GM12878 (cell line): ENCODE measurements at regions of chr7 and their contacts with region 1.

Region 1: DNA sequence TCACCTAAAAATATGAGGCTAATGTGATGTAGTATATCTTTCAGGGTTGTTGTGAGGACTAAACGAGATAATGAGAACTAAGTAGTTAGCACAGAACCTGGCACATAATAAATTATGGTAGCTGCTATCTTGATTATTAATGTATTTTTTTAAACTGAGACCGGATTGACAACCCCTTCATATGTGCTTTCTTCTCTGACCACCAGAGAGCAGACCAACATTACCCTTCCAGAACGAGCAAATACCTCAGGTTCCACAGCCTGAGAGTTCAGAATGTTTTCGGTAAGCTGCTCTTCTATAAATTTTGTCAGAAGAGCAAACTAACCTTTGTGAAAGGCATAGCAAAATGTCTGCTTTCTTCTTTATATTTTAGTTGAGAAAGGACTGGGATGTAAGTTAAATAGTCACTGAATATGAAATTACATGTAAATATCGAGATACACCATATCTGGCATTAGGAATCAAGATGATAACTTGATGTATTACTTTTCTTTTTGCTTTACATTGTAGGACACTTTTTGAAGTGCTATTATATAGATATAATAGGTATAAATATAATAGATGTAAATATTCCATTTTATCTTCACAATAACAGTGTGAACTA is 13.6 kb upstream of the BPGM start:
- DNase-seq: no peak
- ATAC-seq: peak; percentile 76
- H3K4me3 ChIP-seq: no peak overlapping the region
- H3K27ac ChIP-seq: no peak overlapping the region
- H3K4me1 ChIP-seq: peaks cover 16% of the 10 kb centered on the region
- H3K27me3 ChIP-seq: no peaks in the 10 kb centered on the region
- CTCF ChIP-seq: peak; percentile 63 to 80 (median 76)
- EP300 ChIP-seq: no peak
- POLR2A ChIP-seq: no peak
- RAD21 ChIP-seq: peak; percentile 92

Region 2: DNA sequence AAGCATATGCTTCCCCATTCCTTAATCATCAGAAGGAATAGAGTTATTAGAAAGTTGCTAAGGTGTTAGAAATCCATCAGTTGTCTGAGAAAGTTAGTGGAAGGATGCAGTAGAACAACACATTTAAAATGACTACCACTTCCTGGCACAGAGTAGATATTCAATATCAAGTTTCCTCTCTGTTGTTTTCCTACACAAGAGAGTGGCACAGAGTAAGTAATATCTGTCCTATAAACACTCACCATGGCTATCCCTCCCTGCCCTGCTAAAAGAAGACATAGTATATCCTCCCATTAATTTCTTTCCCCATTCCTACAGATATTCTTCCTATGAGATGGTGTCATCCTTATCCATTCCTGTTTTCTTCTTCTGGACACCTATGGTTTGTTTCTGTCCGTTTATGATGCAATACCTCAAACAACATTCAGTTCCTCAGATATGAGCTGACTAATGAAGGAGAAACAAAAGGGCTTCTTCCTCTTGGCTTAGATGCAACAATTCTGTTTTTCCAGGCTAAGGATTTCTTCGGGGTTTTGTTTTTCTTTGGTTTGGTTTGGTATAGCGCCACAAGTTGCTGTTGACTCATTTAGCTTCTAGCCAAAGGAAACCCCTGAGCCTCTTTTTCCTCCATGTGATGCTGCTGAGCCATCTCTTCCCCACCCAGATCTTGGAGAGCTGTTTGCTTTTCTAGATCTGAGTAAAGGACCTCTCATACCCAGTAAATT is 19.3 kb before region 1 on chr7:
- CTCF ChIA-PET with region 1: interaction called, 12 read pairs
- POLR2A ChIA-PET with region 1: no interaction called
- RAD21 ChIA-PET with region 1: interaction called, 3 read pairs
- SMC1A ChIA-PET with region 1: interaction called, 12 read pairs
- in situ Hi-C with region 1: no loop called
- intact Hi-C with region 1: no loop called
- DNase-seq: no peak
- ATAC-seq: no peak
- H3K4me3 ChIP-seq: no peak overlapping the region
- H3K27ac ChIP-seq: no peak overlapping the region
- H3K4me1 ChIP-seq: no peaks in the 10 kb centered on the region
- H3K27me3 ChIP-seq: peaks cover 0 to 3% of the 10 kb centered on the region in 2 experiments; a peak in 1 of 4 replicates
- CTCF ChIP-seq: no peak
- EP300 ChIP-seq: no peak
- POLR2A ChIP-seq: no peak
- RAD21 ChIP-seq: no peak

Region 3: GRCh38 chr7:134669845-134670373 is 36.9 kb after region 1 on chr7:
- CTCF ChIA-PET with region 1: interaction called, 5 read pairs
- POLR2A ChIA-PET with region 1: no interaction called
- RAD21 ChIA-PET with region 1: interaction called, 3 read pairs
- SMC1A ChIA-PET with region 1: interaction called, 29 read pairs
- in situ Hi-C with region 1: no loop called
- intact Hi-C with region 1: no loop called
- DNase-seq: peak; percentile 23
- ATAC-seq: peak; percentile 69
- H3K4me3 ChIP-seq: no peak overlapping the region
- H3K27ac ChIP-seq: no peak overlapping the region
- H3K4me1 ChIP-seq: peaks cover 7% of the 10 kb centered on the region
- H3K27me3 ChIP-seq: no peaks in the 10 kb centered on the region
- CTCF ChIP-seq: no peak
- EP300 ChIP-seq: no peak
- POLR2A ChIP-seq: no peak
- RAD21 ChIP-seq: no peak

Region 4: GRCh38 chr7:134724606-134725005 is 91.6 kb after region 1 on chr7:
- CTCF ChIA-PET with region 1: interaction called, 32 read pairs
- POLR2A ChIA-PET with region 1: no interaction called
- RAD21 ChIA-PET with region 1: interaction called, 3 read pairs
- SMC1A ChIA-PET with region 1: interaction called, 13 read pairs
- in situ Hi-C with region 1: no loop called
- intact Hi-C with region 1: no loop called
- DNase-seq: peak; percentile 11
- ATAC-seq: peak; percentile 85
- H3K4me3 ChIP-seq: no peak overlapping the region
- H3K27ac ChIP-seq: no peak overlapping the region
- H3K4me1 ChIP-seq: no peaks in the 10 kb centered on the region
- H3K27me3 ChIP-seq: no peaks in the 10 kb centered on the region; a peak in 1 of 4 replicates
- CTCF ChIP-seq: peak; percentile 48 to 59 (median 52); a peak in 5 of 6 replicates
- EP300 ChIP-seq: no peak
- POLR2A ChIP-seq: no peak
- RAD21 ChIP-seq: peak; percentile 52

Region 5: DNA sequence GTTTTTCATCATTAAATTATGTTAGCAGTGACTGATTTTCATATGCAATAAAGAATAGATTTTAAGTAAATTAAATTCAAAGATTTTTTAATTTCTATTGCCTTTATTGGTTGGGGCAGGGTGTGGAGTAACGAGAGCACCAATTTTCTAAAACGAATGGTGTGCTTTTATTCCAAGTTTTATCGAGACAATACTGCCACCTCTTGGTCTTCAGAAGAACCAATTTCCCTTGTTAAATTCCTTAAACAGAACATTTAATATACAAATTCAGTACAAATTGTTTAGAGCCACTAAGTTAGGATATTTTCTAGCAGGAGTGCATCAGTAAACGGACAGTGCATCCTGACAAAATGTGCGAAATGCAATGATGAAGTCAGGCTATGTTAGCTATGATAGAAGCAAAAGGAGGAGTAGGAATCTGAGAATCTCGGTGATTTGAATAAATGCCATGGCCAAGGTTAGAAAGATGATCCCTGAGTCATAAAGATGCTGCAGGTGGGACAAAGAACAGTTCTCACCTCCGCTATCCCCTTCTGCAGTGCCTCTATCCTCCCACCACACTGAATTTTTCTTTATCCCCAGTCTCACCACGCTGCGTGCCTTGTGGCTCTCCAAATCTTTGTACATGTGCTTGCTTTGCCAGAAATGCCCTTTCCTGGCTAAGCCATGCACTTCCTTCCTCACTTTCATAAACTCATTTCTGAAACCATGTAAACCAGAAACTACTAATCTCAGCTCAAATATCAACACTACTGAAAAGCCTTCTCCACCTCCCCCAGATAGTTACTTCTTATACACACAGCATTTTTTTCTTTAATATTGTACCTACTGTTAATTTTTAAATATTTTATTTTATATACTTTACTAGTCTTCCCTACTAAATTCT is 321.4 kb after region 1 on chr7:
- CTCF ChIA-PET with region 1: interaction called, 49 read pairs
- POLR2A ChIA-PET with region 1: no interaction called
- RAD21 ChIA-PET with region 1: interaction called, 28 read pairs
- SMC1A ChIA-PET with region 1: interaction called, 34 read pairs
- in situ Hi-C with region 1: loop called (anchors 5 kb)
- intact Hi-C with region 1: no loop called
- DNase-seq: peak; percentile 15
- ATAC-seq: peak; percentile 83
- H3K4me3 ChIP-seq: no peak overlapping the region
- H3K27ac ChIP-seq: no peak overlapping the region
- H3K4me1 ChIP-seq: no peaks in the 10 kb centered on the region; the same call in 1 of the 2 replicates
- H3K27me3 ChIP-seq: no peaks in the 10 kb centered on the region
- CTCF ChIP-seq: peak; percentile 49 to 64 (median 58)
- EP300 ChIP-seq: no peak
- POLR2A ChIP-seq: no peak
- RAD21 ChIP-seq: peak; percentile 72

Region 6: DNA sequence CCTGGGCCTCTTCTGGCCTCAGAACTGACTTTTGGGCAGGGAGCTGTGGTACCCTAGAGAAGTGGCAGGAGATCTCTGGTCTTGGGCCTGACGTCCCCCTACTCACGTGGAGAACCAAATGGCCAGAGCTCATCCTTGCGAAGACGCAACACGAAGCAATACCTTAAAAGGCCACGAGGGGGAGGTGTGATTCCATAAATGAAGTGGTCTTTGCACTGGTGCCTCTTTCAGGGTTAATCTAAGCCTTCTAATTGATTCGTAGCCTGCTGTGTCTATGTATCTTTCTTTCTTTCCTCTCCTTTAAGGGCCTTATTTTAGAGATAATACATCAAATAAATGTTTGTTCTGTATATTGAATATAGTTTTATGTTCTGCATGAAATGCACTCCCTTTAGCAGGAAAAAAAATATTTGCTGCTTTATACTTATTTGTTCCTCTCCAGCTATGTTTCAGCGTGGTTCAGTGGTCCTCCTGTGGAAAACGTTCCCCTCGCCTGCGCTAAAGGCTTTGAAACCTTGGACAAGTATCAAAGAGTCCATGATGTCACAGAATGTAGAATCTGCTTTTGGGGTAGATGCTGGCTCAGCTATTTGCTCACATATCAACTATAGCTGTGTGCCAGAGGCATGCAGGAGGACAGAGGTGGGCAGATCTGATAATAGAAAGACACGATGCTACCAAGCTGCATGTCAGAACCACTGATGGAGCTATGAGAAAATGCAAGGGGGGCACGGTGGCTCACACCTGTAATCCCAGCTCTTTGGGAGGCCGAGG is 641.6 kb after region 1 on chr7:
- CTCF ChIA-PET with region 1: interaction called, 13 read pairs
- POLR2A ChIA-PET with region 1: no interaction called
- RAD21 ChIA-PET with region 1: interaction called, 6 read pairs
- SMC1A ChIA-PET with region 1: interaction called, 12 read pairs
- in situ Hi-C with region 1: no loop called
- intact Hi-C with region 1: no loop called
- DNase-seq: peak; percentile 45
- ATAC-seq: peak; percentile 98
- H3K4me3 ChIP-seq: no peak overlapping the region
- H3K27ac ChIP-seq: no peak overlapping the region
- H3K4me1 ChIP-seq: no peaks in the 10 kb centered on the region
- H3K27me3 ChIP-seq: no peaks in the 10 kb centered on the region
- CTCF ChIP-seq: peak; percentile 75 to 86 (median 81); a peak in 5 of 6 replicates
- EP300 ChIP-seq: no peak
- POLR2A ChIP-seq: no peak
- RAD21 ChIP-seq: peak; percentile 81

Region 7: GRCh38 chr7:135536150-135536549 is 903.1 kb after region 1 on chr7:
- CTCF ChIA-PET with region 1: no interaction called
- POLR2A ChIA-PET with region 1: no interaction called
- RAD21 ChIA-PET with region 1: no interaction called
- SMC1A ChIA-PET with region 1: no interaction called
- in situ Hi-C with region 1: no loop called
- intact Hi-C with region 1: no loop called
- DNase-seq: no peak
- ATAC-seq: no peak
- H3K4me3 ChIP-seq: no peak overlapping the region
- H3K27ac ChIP-seq: no peak overlapping the region
- H3K4me1 ChIP-seq: no peaks in the 10 kb centered on the region
- H3K27me3 ChIP-seq: no peaks in the 10 kb centered on the region
- CTCF ChIP-seq: no peak
- EP300 ChIP-seq: no peak
- POLR2A ChIP-seq: no peak
- RAD21 ChIP-seq: no peak